PC-9 (cell line): ENCODE measurements at regions of chr14 and their contacts with region 1.

Region 1: GRCh38 chr14:24171422-24172260 is at the start of gene REC8:
- DNase-seq: no peak
- H3K4me3 ChIP-seq: no peak within 1 kb of the TSS
- H3K27ac ChIP-seq: no peak within 1 kb of the TSS
- H3K4me1 ChIP-seq: no peaks in the 10 kb centered on the region
- H3K27me3 ChIP-seq: no peaks in the 10 kb centered on the region
- CTCF ChIP-seq: no peak
- total RNA-seq, gene REC8: 6.5 and 8.3 TPM in 2 replicates

Region 2: DNA sequence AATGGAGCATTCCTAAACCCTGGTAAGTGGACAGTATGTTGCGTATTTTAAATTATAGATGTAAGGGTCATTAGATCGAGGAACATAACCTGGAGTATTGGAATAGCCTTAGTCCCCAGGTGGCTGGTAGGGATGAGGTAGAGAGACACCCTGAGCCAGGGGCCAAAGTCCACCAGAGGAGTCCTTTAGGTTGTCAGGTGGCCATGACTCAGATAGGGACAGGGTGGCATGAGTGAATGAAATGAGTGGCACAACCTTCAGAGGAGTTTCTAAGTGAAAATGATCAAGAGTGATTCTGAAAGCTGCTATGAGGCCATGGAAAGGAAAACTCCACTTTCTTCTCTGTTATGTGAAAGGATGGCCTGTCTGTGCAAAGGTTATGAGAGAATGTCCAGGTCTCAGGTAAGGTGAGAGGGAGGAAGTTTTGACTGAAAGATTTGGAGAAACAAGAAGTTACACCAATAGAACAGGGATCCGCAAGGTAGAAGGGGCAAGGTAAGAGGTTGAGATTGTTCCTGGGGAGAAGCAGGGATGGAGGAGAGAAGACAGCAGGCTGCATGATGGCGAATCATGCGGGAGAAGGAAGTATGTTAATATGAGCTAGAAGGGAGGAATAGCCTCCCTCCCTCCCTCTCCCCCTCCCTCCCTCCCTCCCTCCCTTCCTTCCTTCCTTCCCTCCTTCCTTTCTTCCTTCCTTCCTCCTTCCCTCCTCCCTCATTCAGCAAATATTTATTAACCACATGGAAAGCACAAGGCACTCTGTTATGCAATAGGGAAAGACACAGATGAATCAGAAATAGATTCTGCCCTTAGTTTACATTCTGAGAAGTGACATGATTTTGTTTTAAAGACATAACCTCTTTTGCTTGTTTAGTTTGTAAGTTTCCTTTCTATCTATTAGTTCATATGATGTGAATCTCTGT is 182.2 kb after region 1 on chr14:
- CTCF ChIA-PET with region 1: no interaction called
- POLR2A ChIA-PET with region 1: interaction called, 15 read pairs
- intact Hi-C with region 1: no loop called
- DNase-seq: peak in 1 of 2 experiments; percentile 34
- H3K4me3 ChIP-seq: no peak overlapping the region
- H3K27ac ChIP-seq: no peak overlapping the region; the same call in 1 of the 2 replicates
- H3K4me1 ChIP-seq: peaks cover 18% of the 10 kb centered on the region; the same call in 1 of the 2 replicates
- H3K27me3 ChIP-seq: no peaks in the 10 kb centered on the region
- CTCF ChIP-seq: no peak